Left ventricle myocardium superior (tissue), 1 donor: ENCODE measurements at regions of chr16 and their contacts with region 1.

Region 1: DNA sequence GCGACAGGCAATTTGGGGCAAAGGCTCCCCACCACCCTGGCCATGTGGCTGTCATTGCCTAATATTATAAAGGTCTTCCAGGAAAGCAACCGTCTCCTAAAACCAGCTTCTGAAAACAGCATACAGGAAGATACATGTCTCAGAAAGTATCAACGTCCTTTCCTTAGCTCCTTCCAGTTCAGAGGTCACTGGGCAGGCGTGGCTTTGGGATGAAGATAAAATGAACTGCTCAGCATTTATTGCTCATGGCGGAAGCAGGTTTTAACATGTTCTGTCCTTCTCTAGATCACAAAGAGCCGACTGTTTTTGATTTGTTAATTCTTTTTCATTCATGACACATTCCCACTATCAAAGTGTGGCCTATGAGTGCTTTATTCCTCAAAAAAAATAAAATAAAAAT is 8.0 kb downstream of the CFAP20 start:
- DNase-seq: no peak
- ATAC-seq: no peak

Region 2: GRCh38 chr16:58025351-58026138 is 95.6 kb before region 1 on chr16 and contains the start of gene MMP15:
- intact Hi-C with region 1: loop called (anchors 2 kb)
- DNase-seq: peak; percentile 89
- ATAC-seq: peak; percentile 68
- total RNA-seq, gene MMP15: 62.2 TPM